Keratinocyte (primary cell): ENCODE measurements at regions of chr3 and their contacts with region 1.

Region 1: GRCh38 chr3:4290272-4290893 is 12.8 kb upstream of the SETMAR start:
- DNase-seq: no peak
- H3K4me3 ChIP-seq: no peak overlapping the region
- H3K27ac ChIP-seq: no peak overlapping the region
- H3K4me1 ChIP-seq: no peaks in the 10 kb centered on the region
- H3K27me3 ChIP-seq: no peaks in the 10 kb centered on the region
- CTCF ChIP-seq: peak; percentile 66 to 86 (median 78)

Region 2: GRCh38 chr3:3200632-3201212 is 1089.7 kb before region 1 on chr3:
- dilution Hi-C with region 1: loop called (anchors 25 kb)
- DNase-seq: no peak
- H3K4me3 ChIP-seq: no peak overlapping the region
- H3K27ac ChIP-seq: no peak overlapping the region
- H3K4me1 ChIP-seq: no peaks in the 10 kb centered on the region
- H3K27me3 ChIP-seq: no peaks in the 10 kb centered on the region
- CTCF ChIP-seq: peak; percentile 67 to 69 (median 69)

Region 3: GRCh38 chr3:4251412-4251811 is 39.0 kb before region 1 on chr3:
- dilution Hi-C with region 1: no loop called
- DNase-seq: no peak
- H3K4me3 ChIP-seq: no peak overlapping the region
- H3K27ac ChIP-seq: no peak overlapping the region
- H3K4me1 ChIP-seq: no peaks in the 10 kb centered on the region
- H3K27me3 ChIP-seq: no peaks in the 10 kb centered on the region
- CTCF ChIP-seq: no peak